ENCODE measurements at regions of chr9 and their contacts with region 1.

Region 1: GRCh38 chr9:111597817-111598729 is 1.4 kb downstream of the PTGR1 start:
- H3K4me3 ChIP-seq: peak overlapping the region; percentile 61
- H3K27ac ChIP-seq: no peak overlapping the region; the same call in 1 of the 2 replicates
- H3K4me1 ChIP-seq: peaks cover 5% of the 10 kb centered on the region; the same call in 1 of the 2 replicates
- CTCF ChIP-seq: no peak

Region 2: GRCh38 chr9:111621895-111622480 is 23.9 kb after region 1 on chr9:
- CTCF ChIA-PET with region 1: interaction called, 18 read pairs
- POLR2A ChIA-PET with region 1: interaction called, 4 read pairs
- H3K4me3 ChIP-seq: no peak overlapping the region
- H3K27ac ChIP-seq: no peak overlapping the region
- H3K4me1 ChIP-seq: no peaks in the 10 kb centered on the region
- CTCF ChIP-seq: no peak

Region 3: DNA sequence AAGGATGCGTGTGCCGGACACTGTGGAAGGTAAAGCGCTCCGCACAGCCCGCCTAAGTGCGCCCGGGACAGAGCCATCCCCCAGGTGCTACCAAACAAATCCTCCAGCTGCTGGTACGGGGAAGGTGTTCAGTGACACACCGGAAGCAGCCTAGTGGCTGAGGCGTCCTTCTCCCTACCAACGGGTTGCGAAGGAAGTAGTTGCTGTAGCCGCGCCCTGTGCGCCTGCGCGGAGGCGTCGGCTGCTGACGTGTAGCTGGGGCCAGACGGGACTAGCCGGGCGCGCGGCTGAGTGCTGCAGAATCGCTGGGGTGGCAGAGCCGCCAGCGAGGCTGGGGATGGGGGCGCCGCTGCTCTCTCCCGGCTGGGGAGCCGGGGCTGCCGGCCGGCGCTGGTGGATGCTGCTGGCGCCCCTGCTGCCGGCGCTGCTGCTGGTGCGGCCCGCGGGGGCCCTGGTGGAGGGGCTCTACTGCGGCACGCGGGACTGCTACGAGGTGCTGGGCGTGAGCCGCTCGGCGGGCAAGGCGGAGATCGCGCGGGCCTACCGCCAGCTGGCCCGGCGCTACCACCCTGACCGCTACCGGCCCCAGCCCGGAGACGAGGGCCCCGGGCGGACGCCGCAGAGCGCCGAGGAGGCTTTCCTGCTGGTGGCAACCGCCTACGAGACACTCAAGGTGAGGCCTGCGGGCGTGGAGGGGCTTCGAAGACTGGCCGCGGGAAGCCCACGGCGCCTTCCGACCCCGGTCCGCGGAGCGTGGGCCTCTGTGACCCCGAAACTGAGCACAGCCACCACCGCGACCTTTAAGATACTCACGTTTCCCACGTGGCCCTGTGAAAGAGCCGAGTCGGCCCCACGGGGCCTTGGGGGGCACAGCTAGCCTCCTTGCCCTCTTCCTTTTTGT is 33.2 kb after region 1 on chr9 and contains the start of gene DNAJC25:
- CTCF ChIA-PET with region 1: interaction called, 6 read pairs
- POLR2A ChIA-PET with region 1: interaction called, 15 read pairs
- H3K4me3 ChIP-seq: peak within 1 kb of the TSS; percentile 86
- H3K27ac ChIP-seq: peak within 1 kb of the TSS; percentile 48; the same call in 1 of the 2 replicates
- H3K4me1 ChIP-seq: peaks cover 2% of the 10 kb centered on the region; the same call in 1 of the 2 replicates
- CTCF ChIP-seq: peak; percentile 48; the same call in 1 of the 2 replicates

Region 4: DNA sequence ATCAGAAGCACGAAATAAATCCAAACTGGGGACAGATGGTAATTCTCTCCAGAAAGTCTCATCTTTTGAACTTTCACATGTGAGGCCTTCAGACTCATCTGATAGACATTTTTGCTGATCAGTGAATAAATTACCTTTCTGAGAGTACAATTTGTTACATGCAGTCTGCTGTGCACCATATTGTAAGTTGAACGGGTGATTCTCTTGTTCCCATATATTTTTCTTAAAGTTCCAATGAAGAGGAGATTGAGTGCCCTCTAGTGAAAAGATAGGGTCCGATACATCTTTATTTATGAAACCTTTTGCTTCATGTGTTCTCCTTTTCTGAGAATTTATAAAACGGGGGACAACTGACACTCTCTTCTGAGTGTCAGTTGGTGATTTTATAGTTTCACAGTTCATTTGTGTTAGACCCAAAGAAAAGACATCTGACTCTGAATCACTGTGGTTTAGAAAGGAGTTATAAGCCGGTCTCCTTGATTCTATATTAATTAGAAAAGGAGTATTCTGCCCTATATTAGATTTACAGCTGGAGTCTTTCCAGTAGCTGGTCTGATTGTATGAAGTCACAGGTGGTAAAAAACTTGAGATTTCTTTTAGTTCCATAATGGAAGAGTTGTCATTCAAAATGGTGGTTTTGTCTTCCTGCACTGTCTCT is 93.7 kb after region 1 on chr9:
- CTCF ChIA-PET with region 1: interaction called, 14 read pairs
- POLR2A ChIA-PET with region 1: no interaction called
- H3K4me3 ChIP-seq: no peak overlapping the region
- H3K27ac ChIP-seq: no peak overlapping the region
- H3K4me1 ChIP-seq: no peaks in the 10 kb centered on the region
- CTCF ChIP-seq: no peak

Region 5: GRCh38 chr9:111759762-111760639 is 161.9 kb after region 1 on chr9:
- CTCF ChIA-PET with region 1: interaction called, 11 read pairs
- POLR2A ChIA-PET with region 1: no interaction called
- H3K4me3 ChIP-seq: no peak overlapping the region
- H3K27ac ChIP-seq: no peak overlapping the region
- H3K4me1 ChIP-seq: no peaks in the 10 kb centered on the region
- CTCF ChIP-seq: peak; percentile 36; the same call in 1 of the 2 replicates

Measured in HEK293 (cell line).